ENCODE measurements at regions of chr12 and their contacts with region 1.

Region 1: GRCh38 chr12:12376646-12377448 is 20.0 kb downstream of the BORCS5 start:
- DNase-seq: peak; percentile 12
- H3K4me3 Mint-ChIP-seq: no peak overlapping the region
- H3K27ac Mint-ChIP-seq: peak overlapping the region; percentile 41
- H3K4me1 Mint-ChIP-seq: peaks cover 39% of the 10 kb centered on the region
- H3K27me3 Mint-ChIP-seq: no peaks in the 10 kb centered on the region

Region 2: GRCh38 chr12:12349711-12350665 is 26.9 kb before region 1 on chr12 and contains the start of gene MANSC1:
- intact Hi-C with region 1: no loop called
- DNase-seq: peak; percentile 38
- H3K4me3 Mint-ChIP-seq: peak within 1 kb of the TSS; percentile 75
- H3K27ac Mint-ChIP-seq: peak within 1 kb of the TSS; percentile 75
- H3K4me1 Mint-ChIP-seq: peaks cover 21% of the 10 kb centered on the region
- H3K27me3 Mint-ChIP-seq: no peaks in the 10 kb centered on the region
- total RNA-seq, gene MANSC1: 0.83 and 1.4 TPM in 2 replicates

Region 3: DNA sequence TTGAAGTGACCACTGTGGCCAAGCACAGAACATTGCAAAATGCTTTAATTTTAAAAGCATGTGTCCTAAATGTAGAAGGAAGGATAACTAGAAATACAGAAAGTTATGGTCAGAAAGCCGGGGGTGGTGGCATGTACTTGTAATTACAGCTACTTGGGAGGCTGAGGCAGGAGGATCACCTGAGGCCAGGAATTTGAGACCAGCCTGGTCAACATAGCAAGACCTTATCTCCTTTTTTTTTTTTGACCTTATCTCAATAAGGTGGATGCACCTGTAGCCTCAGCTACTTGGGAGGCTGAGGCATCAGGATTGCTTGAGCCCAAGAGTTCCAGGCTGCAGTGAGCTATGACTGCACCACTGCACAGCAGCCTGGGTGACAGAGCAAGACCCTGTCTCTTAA is 13.5 kb after region 1 on chr12:
- intact Hi-C with region 1: loop called (anchors 1 kb)
- DNase-seq: no peak
- H3K4me3 Mint-ChIP-seq: no peak overlapping the region
- H3K27ac Mint-ChIP-seq: no peak overlapping the region
- H3K4me1 Mint-ChIP-seq: peaks cover 17% of the 10 kb centered on the region
- H3K27me3 Mint-ChIP-seq: no peaks in the 10 kb centered on the region

Region 4: DNA sequence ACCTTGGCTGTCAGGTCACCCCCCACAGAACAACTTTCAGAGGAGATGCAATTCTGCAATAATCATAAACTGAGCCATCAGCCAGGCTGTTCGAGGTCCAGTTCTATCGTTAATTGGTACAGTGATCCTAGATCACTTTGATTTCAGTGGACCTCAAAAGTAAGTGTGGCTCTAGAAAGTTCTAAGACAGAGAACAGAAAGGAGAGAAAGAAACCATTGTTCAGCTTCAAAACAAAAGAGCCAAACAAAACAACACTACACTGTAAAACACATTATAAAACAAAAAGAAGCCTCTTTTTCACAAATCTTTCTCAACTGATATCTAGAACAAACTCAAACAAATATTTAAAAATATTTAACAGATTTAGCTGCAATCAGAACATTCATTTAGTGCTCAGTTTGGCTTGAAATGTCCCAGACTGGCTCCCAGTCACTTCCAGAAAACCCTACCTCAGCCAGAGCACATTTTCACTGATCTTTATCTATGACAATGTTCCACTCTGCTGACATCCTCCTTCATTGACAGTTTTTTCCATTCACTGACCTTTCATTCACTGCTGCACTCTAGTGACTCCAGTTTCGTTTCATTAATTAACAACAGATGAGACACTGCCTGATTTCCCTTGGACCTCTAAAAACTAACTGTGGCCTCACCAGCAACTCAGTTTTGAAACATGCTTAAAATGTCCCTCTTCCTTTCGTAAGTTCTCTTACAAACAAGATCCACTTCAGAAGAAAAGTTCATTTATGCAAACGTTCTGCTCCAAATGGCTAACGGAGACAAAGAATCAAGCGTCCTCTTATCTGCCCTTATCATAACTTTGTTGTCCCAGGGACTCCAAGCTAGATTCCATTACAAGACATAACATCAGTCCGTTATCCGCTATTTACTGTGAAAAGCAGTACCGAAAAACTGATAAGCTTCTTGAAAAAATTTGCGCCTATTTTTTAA is 129.0 kb after region 1 on chr12:
- intact Hi-C with region 1: loop called (anchors 1 kb)
- DNase-seq: peak; percentile 17
- H3K4me3 Mint-ChIP-seq: peak overlapping the region; percentile 63
- H3K27ac Mint-ChIP-seq: peak overlapping the region; percentile 93
- H3K4me1 Mint-ChIP-seq: peaks cover 53% of the 10 kb centered on the region
- H3K27me3 Mint-ChIP-seq: no peaks in the 10 kb centered on the region

Region 5: DNA sequence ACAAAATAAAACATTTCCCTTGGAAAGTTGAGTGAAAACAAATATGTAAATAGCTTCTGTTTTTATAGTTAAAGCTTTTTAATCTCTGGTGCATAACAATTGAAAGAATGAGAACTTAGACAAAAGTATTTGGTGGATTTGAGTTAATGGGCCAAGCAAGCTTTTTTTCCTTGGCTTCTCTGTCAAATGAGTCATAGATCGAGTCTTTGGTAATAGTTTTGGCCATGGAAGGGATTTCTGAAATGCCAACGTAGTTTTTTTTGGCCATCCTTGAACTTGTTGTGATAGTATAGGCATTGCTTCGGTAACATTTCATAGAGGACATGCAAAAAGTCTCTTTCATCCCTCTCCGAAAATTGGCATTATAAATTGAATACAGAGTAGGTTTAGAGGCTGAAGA is 284.2 kb after region 1 on chr12:
- intact Hi-C with region 1: loop called (anchors 1 kb)
- DNase-seq: no peak
- H3K4me3 Mint-ChIP-seq: no peak overlapping the region
- H3K27ac Mint-ChIP-seq: no peak overlapping the region
- H3K4me1 Mint-ChIP-seq: peaks cover 5% of the 10 kb centered on the region
- H3K27me3 Mint-ChIP-seq: peaks cover 2% of the 10 kb centered on the region

Region 6: GRCh38 chr12:12704593-12705230 is 327.9 kb after region 1 on chr12:
- intact Hi-C with region 1: loop called (anchors 1 kb)
- DNase-seq: no peak
- H3K4me3 Mint-ChIP-seq: peak overlapping the region; percentile 11
- H3K27ac Mint-ChIP-seq: peak overlapping the region; percentile 14
- H3K4me1 Mint-ChIP-seq: peaks cover 25% of the 10 kb centered on the region
- H3K27me3 Mint-ChIP-seq: no peaks in the 10 kb centered on the region

Region 7: GRCh38 chr12:12954356-12954755 is 577.5 kb after region 1 on chr12:
- intact Hi-C with region 1: no loop called
- DNase-seq: no peak
- H3K4me3 Mint-ChIP-seq: no peak overlapping the region
- H3K27ac Mint-ChIP-seq: no peak overlapping the region
- H3K4me1 Mint-ChIP-seq: no peaks in the 10 kb centered on the region
- H3K27me3 Mint-ChIP-seq: peaks cover 4% of the 10 kb centered on the region

Measured in activated T-helper 1 cell treated with anti-CD3 and anti-CD28 coated beads, Interleukin-12 subunit alpha, Interleukin-12 subunit beta, Interleukin-2, Interleukin-4 antibody, amounts not matched to agents 30 ng/mL and 10 ng/mL and 1 ng/mL, durations not matched to agents 14 hours and 24 hours and 36 hours (primary cell).